Mammary epithelial cell (primary cell): ENCODE measurements at regions of chrX and their contacts with region 1.

Region 1: DNA sequence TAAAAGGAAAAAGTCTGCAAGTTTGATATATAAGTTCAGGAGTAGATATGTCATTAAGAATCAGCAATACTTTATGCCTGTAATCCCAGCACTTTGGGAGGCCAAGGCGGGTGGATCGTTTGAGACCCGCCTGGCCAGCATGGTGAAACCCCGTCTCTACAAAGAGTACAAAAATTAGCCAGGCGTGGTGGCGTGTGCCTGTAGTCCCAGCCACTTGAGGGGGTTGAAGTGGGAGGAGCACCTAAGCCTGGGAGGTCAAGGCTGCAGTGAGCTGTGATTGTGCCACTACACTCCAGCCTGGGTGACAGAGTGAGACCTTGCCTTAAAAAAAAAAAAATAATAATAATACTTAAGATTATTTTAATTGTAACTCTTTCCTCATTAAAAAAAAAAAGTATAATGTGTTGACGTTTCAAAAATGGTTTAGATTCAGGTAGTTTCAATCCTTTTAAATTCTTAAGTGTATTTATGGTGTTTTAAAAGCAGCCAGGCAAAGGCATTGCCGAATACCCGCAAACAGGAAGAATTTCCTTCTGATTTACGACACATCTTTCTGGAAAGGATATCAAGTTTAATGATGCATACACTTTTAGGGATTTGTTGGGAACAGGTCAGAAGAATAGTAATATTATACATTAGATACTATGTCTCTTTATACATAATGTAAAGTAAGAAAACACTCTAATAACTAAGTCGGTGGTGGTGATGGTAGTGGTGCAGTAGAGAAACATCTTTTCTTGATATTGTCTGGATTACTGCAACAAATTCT is 80.9 kb downstream of the KDM6A start:
- DNase-seq: no peak
- H3K4me3 ChIP-seq: no peak overlapping the region
- H3K27ac ChIP-seq: no peak overlapping the region
- H3K4me1 ChIP-seq: peaks cover 11% of the 10 kb centered on the region
- H3K27me3 ChIP-seq: no peaks in the 10 kb centered on the region
- CTCF ChIP-seq: no peak

Region 2: DNA sequence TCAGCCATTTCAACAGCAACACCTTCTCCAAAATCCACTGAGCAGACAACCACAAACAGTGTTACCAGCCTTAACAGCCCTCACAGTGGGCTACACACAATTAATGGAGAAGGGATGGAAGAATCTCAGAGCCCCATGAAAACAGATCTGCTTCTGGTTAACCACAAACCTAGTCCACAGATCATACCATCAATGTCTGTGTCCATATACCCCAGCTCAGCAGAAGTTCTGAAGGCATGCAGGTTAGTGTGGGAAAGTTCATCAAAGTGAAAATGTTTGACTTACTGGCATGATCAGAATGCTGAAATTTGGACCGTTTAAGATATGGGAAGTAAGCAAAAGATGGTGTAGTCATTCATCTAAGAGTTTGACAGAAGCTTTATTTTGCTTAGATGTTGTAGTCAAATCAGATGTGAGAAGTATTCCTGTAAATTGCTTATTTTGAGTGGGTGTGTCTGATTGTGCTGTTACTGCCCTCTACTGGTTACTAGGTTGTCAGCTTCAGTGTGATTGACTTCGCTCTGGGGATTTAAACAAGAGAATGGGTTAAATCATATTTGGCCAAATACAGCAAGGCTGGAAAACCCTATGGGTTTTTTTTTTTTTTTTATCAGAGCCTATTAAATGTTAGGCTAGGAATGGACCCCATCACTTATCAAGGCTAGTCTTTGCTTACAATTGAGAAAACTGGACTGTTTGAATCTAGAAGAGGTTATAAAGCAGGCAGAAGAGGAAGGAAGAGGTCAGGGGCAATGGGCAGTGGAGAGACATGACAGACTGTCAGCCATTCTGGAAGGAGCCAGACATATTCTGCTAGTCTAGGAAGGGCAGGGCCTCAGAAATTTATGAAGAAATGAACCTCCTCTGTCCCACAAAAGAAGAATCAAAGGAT is 116.4 kb after region 1 on chrX:
- CTCF ChIA-PET with region 1: no interaction called
- dilution Hi-C with region 1: no loop called
- in situ Hi-C with region 1: no loop called
- intact Hi-C with region 1: loop called (anchors 10 kb)
- DNase-seq: peak; percentile 29
- H3K4me3 ChIP-seq: no peak overlapping the region
- H3K27ac ChIP-seq: no peak overlapping the region
- H3K4me1 ChIP-seq: no peaks in the 10 kb centered on the region
- H3K27me3 ChIP-seq: no peaks in the 10 kb centered on the region
- CTCF ChIP-seq: peak; percentile 69 to 72